ENCODE measurements at regions of chr18 and their contacts with region 1.

Region 1: DNA sequence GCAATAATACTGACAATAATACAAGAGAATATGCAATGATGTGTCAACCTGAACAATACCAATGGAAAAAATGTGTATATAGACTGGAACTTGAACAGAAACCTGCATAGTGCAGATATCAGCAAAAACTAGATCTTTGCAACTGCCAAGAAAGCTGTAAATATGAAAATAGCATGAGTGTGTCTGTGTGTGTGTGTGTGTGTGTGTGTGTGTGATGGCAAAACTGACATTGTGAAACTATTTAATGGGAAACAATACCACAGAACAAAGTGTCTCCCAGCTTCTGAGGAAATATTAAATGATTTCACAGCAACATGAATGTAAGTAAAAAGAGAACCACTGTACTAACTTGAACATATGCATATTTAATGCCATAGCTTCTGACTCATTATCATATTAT is 558.2 kb upstream of the LINC00305 start:
- DNase-seq: no peak
- ATAC-seq: no peak
- H3K4me3 ChIP-seq: no peak overlapping the region
- H3K4me3 Mint-ChIP-seq: no peak overlapping the region
- H3K27ac ChIP-seq: no peak overlapping the region
- H3K27ac Mint-ChIP-seq: no peak overlapping the region
- H3K4me1 ChIP-seq: no peaks in the 10 kb centered on the region
- H3K4me1 Mint-ChIP-seq: no peaks in the 10 kb centered on the region
- H3K27me3 ChIP-seq: no peaks in the 10 kb centered on the region
- H3K27me3 Mint-ChIP-seq: no peaks in the 10 kb centered on the region

Region 2: GRCh38 chr18:65547046-65547445 is 840.0 kb after region 1 on chr18:
- CTCF ChIA-PET with region 1: no interaction called
- POLR2A ChIA-PET with region 1: no interaction called
- intact Hi-C with region 1: loop called in 1 of 2 experiments (anchors 5 kb)
- DNase-seq: no peak
- ATAC-seq: no peak
- H3K4me3 ChIP-seq: no peak overlapping the region
- H3K4me3 Mint-ChIP-seq: no peak overlapping the region
- H3K27ac ChIP-seq: no peak overlapping the region
- H3K27ac Mint-ChIP-seq: no peak overlapping the region
- H3K4me1 ChIP-seq: no peaks in the 10 kb centered on the region
- H3K4me1 Mint-ChIP-seq: no peaks in the 10 kb centered on the region
- H3K27me3 ChIP-seq: no peaks in the 10 kb centered on the region
- H3K27me3 Mint-ChIP-seq: no peaks in the 10 kb centered on the region

Measured in naive thymus-derived CD4-positive, alpha-beta T cell (primary cell).